ENCODE measurements at regions of chr9 and their contacts with region 1.

Region 1: GRCh38 chr9:37174247-37174646 is 53.9 kb downstream of the ZCCHC7 start:
- DNase-seq: no peak
- ATAC-seq: no peak
- H3K4me3 ChIP-seq: no peak overlapping the region
- H3K27ac ChIP-seq: no peak overlapping the region
- H3K4me1 ChIP-seq: no peaks in the 10 kb centered on the region
- H3K27me3 ChIP-seq: no peaks in the 10 kb centered on the region
- CTCF ChIP-seq: no peak
- EP300 ChIP-seq: no peak
- POLR2A ChIP-seq: no peak
- RAD21 ChIP-seq: no peak

Region 2: GRCh38 chr9:37027582-37028419 is 146.4 kb before region 1 on chr9:
- CTCF ChIA-PET with region 1: no interaction called
- POLR2A ChIA-PET with region 1: no interaction called
- in situ Hi-C with region 1: no loop called
- intact Hi-C with region 1: no loop called
- DNase-seq: peak; percentile 95 to 99 (median 98)
- ATAC-seq: peak; percentile 100
- H3K4me3 ChIP-seq: peak overlapping the region; percentile 18; the same call in 1 of the 2 replicates
- H3K27ac ChIP-seq: no peak overlapping the region
- H3K4me1 ChIP-seq: peaks cover 2 to 35% of the 10 kb centered on the region in 2 experiments; a peak in 3 of 5 replicates
- H3K27me3 ChIP-seq: peaks cover 18 to 60% of the 10 kb centered on the region in 2 experiments
- CTCF ChIP-seq: no peak
- EP300 ChIP-seq: no peak
- POLR2A ChIP-seq: no peak
- RAD21 ChIP-seq: no peak

Region 3: DNA sequence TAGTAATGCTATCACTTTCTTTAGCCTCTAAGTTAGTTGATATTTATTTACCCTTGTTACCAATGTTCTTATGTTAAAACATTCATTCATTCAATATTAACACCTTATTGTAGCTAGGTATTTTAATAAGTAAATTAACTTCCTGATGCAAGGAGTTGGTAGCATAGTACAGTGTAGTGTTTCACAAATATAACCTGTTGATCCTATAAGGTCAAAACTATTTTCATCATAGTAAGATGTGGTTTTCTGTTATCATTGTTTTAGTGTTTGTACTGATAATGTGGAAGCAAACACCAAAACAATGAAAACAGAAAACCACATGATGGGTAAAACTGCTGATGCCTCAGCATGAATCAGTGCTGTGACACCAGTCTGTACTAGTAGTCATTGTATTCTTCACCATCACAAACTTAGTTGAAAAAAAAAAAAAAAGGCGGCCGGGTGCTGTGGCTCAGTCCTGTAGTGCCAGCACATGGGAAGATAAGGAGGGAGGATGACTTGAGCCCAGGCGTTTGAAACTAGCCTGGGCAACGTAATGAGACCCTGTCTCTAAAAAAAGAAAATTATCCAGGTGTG is 17.4 kb before region 1 on chr9:
- CTCF ChIA-PET with region 1: no interaction called
- POLR2A ChIA-PET with region 1: interaction called, 10 read pairs
- in situ Hi-C with region 1: no loop called
- intact Hi-C with region 1: no loop called
- DNase-seq: no peak
- ATAC-seq: no peak
- H3K4me3 ChIP-seq: no peak overlapping the region
- H3K27ac ChIP-seq: no peak overlapping the region
- H3K4me1 ChIP-seq: no peaks in the 10 kb centered on the region
- H3K27me3 ChIP-seq: no peaks in the 10 kb centered on the region
- CTCF ChIP-seq: no peak
- EP300 ChIP-seq: no peak
- POLR2A ChIP-seq: no peak
- RAD21 ChIP-seq: no peak

Measured in K562 (cell line).